Activated naive CD4-positive, alpha-beta T cell treated with anti-CD3 and anti-CD28 coated beads for 36 hours (primary cell): ENCODE measurements at regions of chr14 and their contacts with region 1.

Region 1: GRCh38 chr14:65927931-65928356 is 515.4 kb downstream of the FUT8 start:
- DNase-seq: peak; percentile 96
- H3K4me3 Mint-ChIP-seq: no peak overlapping the region
- H3K27ac Mint-ChIP-seq: peak overlapping the region; percentile 22
- H3K4me1 Mint-ChIP-seq: peaks cover 41% of the 10 kb centered on the region
- H3K27me3 Mint-ChIP-seq: no peaks in the 10 kb centered on the region

Region 2: GRCh38 chr14:65949711-65950516 is 22.0 kb after region 1 on chr14:
- CTCF ChIA-PET with region 1: interaction called, 6 read pairs
- intact Hi-C with region 1: loop called (anchors 1 kb)
- DNase-seq: peak; percentile 59
- H3K4me3 Mint-ChIP-seq: no peak overlapping the region
- H3K27ac Mint-ChIP-seq: peak overlapping the region; percentile 37
- H3K4me1 Mint-ChIP-seq: peaks cover 28% of the 10 kb centered on the region
- H3K27me3 Mint-ChIP-seq: peaks cover 5% of the 10 kb centered on the region